GM10248 (cell line): ENCODE measurements at regions of chr3 and their contacts with region 1.

Region 1: GRCh38 chr3:178480795-178481194 is 55.4 kb upstream of the KCNMB2 start:
- DNase-seq: peak; percentile 77
- CTCF ChIP-seq: no peak

Region 2: GRCh38 chr3:178392511-178392926 is 88.3 kb before region 1 on chr3:
- CTCF ChIA-PET with region 1: no interaction called
- POLR2A ChIA-PET with region 1: no interaction called
- DNase-seq: no peak
- CTCF ChIP-seq: no peak

Region 3: GRCh38 chr3:178465260-178466180 is 15.3 kb before region 1 on chr3:
- CTCF ChIA-PET with region 1: interaction called, 22 read pairs
- POLR2A ChIA-PET with region 1: no interaction called
- DNase-seq: no peak
- CTCF ChIP-seq: no peak

Region 4: DNA sequence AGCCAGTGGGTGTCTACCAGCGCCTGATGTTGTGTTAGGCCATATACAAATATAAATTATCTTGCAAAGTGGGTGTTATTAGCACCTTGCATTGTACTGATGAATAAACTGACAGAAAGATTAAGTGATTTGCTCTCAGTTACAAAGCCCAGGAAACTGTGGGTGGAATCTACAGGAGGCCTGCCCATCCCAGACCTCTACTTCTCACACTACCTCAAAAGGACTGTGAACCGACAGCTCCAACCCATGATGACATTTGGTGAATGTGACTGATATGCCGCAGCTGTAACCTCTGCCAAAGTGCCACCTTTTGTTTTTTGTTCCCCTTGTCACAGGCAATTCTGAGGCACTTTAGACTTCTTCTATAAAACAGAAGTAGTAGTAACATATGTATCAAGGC is 11.7 kb after region 1 on chr3:
- CTCF ChIA-PET with region 1: interaction called, 15 read pairs
- POLR2A ChIA-PET with region 1: no interaction called
- DNase-seq: no peak
- CTCF ChIP-seq: no peak